ENCODE measurements at regions of chr1 and their contacts with region 1.

Region 1: GRCh38 chr1:198465201-198466144 is 75.0 kb downstream of the ATP6V1G3 start:
- DNase-seq: peak in 1 of 2 donors; percentile 5
- ATAC-seq: peak in 1 of 8 donors; percentile 46
- H3K4me3 ChIP-seq: no peak overlapping the region
- H3K27ac ChIP-seq: no peak overlapping the region
- H3K4me1 ChIP-seq: no peaks in the 10 kb centered on the region
- H3K27me3 ChIP-seq: peaks cover 0 to 5% (median 0%) of the 10 kb centered on the region in 7 donors
- CTCF ChIP-seq: peak; percentile 30 to 74 (median 69)

Region 2: GRCh38 chr1:197521118-197521739 is 944.2 kb before region 1 on chr1:
- intact Hi-C with region 1: loop called in 3 of 10 experiments (anchors 10 kb)
- DNase-seq: no peak
- ATAC-seq: no peak
- H3K4me3 ChIP-seq: no peak overlapping the region
- H3K27ac ChIP-seq: no peak overlapping the region
- H3K4me1 ChIP-seq: peaks cover 0 to 8% (median 0%) of the 10 kb centered on the region in 9 donors
- H3K27me3 ChIP-seq: no peaks in the 10 kb centered on the region
- CTCF ChIP-seq: peak in 8 of 9 donors; percentile 26 to 68 (median 57)

Region 3: GRCh38 chr1:197614916-197615692 is 850.4 kb before region 1 on chr1:
- intact Hi-C with region 1: loop called in 4 of 10 experiments (anchors 5 to 10 kb)
- DNase-seq: no peak
- ATAC-seq: peak in 6 of 8 donors; percentile 43 to 81 (median 55)
- H3K4me3 ChIP-seq: no peak overlapping the region
- H3K27ac ChIP-seq: no peak overlapping the region
- H3K4me1 ChIP-seq: peaks cover 0 to 23% (median 10%) of the 10 kb centered on the region in 9 donors
- H3K27me3 ChIP-seq: no peaks in the 10 kb centered on the region
- CTCF ChIP-seq: peak in 8 of 9 donors; percentile 19 to 72 (median 62)

Region 4: DNA sequence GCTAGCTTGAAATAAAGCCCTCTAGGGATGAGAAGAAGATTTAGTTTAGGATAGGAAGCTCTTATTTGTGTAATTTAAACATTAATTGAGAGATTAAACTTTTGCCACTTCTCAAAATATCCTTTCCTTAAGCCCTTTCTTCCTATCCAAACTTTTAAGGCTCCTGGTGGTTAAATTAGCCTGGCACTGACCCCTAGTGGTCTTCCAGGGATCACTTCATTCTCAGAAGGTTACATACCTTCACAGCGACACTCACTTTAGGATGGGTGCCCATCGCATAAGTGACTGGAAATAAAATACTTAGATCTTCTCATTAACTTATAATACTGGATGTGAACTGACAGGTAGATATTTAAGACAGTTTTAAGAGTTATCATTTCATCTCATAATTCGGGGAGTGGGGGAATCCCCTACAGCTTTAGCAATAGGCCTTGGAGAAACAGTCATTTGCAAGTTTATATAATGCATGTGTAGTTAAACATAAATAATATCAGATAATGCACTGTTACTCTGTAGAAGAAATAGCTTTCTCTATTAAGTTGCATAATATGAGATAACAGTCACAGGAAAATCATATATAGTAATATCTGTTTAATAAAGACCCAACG is 540.9 kb before region 1 on chr1:
- intact Hi-C with region 1: loop called in 1 of 10 experiments (anchors 10 kb)
- DNase-seq: peak in 1 of 2 donors; percentile 27
- ATAC-seq: peak in 3 of 8 donors; percentile 57 to 73 (median 67)
- H3K4me3 ChIP-seq: no peak overlapping the region
- H3K27ac ChIP-seq: no peak overlapping the region
- H3K4me1 ChIP-seq: peaks cover 0 to 19% (median 4%) of the 10 kb centered on the region in 9 donors
- H3K27me3 ChIP-seq: peaks cover 14 to 99% (median 85%) of the 10 kb centered on the region in 7 donors
- CTCF ChIP-seq: peak; percentile 35 to 82 (median 73)

Region 5: DNA sequence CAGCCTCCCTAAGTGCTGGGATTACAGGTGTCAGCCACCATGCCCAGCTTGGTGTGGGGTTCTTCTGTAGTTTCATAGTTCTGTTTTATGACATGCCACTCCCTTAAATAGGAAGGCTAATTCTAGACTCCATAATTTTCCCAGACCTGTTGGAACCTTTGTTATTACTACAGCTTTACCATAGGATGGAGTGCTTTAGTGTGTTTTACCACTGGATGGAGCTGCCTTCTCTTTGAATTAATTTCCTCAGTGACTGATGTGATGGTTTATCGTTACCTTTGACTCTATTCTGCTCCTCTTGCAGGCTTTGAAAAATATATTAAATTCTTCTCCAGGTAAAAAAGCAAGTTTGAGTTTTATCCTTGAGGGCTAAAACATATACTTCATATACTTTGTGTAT is 393.3 kb before region 1 on chr1:
- intact Hi-C with region 1: loop called in 1 of 10 experiments (anchors 5 kb)
- DNase-seq: no peak
- ATAC-seq: no peak
- H3K4me3 ChIP-seq: no peak overlapping the region
- H3K27ac ChIP-seq: no peak overlapping the region
- H3K4me1 ChIP-seq: no peaks in the 10 kb centered on the region
- H3K27me3 ChIP-seq: peaks cover 0 to 14% (median 7%) of the 10 kb centered on the region in 7 donors
- CTCF ChIP-seq: peak in 6 of 9 donors; percentile 9 to 45 (median 32)

Region 6: DNA sequence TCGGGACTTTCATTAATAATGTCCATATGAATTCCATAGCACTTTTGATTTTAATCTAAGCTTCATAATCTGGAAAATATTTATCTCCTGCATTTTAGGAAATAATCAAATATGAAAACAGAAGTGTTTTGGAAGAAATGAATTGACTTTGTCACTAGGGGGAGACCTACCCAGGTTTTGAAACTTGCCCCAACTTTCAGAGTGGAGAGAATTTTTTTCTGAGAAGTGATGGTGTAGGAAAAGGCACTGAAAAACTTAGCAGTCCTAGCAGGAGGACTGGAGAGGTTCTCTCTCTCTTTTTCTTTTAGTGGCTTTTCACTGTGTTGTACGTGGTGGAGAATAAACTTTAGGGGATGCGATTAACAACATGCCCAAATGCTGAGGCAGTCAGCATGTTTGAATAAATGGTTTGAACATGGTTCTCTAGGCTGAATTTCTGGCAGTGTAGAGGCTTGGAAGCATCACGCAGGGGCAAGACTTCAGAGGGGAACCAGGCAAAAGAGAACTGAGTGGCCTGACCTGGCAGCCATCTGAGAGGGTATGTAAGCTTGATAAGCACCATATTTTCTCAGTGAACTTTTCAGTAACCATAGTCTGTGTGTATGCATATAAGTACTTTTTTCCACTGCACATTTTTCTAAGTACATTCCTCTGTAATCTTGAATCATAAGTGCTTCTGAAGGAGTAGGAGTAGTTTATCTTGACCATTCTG is 377.0 kb before region 1 on chr1:
- intact Hi-C with region 1: loop called in 7 of 10 experiments (anchors 5 kb)
- DNase-seq: no peak
- ATAC-seq: peak in 1 of 8 donors; percentile 55
- H3K4me3 ChIP-seq: no peak overlapping the region
- H3K27ac ChIP-seq: no peak overlapping the region
- H3K4me1 ChIP-seq: peaks cover 0 to 11% (median 0%) of the 10 kb centered on the region in 9 donors
- H3K27me3 ChIP-seq: no peaks in the 10 kb centered on the region
- CTCF ChIP-seq: peak; percentile 13 to 76 (median 67)

Region 7: GRCh38 chr1:198201956-198202784 is 263.3 kb before region 1 on chr1:
- intact Hi-C with region 1: loop called in 1 of 10 experiments (anchors 10 kb)
- DNase-seq: no peak
- ATAC-seq: peak in 5 of 8 donors; percentile 26 to 70 (median 51)
- H3K4me3 ChIP-seq: no peak overlapping the region
- H3K27ac ChIP-seq: peak overlapping the region in 8 of 10 donors; percentile 22 to 48 (median 32)
- H3K4me1 ChIP-seq: peaks cover 0 to 95% (median 62%) of the 10 kb centered on the region in 9 donors
- H3K27me3 ChIP-seq: no peaks in the 10 kb centered on the region
- CTCF ChIP-seq: no peak

Region 8: DNA sequence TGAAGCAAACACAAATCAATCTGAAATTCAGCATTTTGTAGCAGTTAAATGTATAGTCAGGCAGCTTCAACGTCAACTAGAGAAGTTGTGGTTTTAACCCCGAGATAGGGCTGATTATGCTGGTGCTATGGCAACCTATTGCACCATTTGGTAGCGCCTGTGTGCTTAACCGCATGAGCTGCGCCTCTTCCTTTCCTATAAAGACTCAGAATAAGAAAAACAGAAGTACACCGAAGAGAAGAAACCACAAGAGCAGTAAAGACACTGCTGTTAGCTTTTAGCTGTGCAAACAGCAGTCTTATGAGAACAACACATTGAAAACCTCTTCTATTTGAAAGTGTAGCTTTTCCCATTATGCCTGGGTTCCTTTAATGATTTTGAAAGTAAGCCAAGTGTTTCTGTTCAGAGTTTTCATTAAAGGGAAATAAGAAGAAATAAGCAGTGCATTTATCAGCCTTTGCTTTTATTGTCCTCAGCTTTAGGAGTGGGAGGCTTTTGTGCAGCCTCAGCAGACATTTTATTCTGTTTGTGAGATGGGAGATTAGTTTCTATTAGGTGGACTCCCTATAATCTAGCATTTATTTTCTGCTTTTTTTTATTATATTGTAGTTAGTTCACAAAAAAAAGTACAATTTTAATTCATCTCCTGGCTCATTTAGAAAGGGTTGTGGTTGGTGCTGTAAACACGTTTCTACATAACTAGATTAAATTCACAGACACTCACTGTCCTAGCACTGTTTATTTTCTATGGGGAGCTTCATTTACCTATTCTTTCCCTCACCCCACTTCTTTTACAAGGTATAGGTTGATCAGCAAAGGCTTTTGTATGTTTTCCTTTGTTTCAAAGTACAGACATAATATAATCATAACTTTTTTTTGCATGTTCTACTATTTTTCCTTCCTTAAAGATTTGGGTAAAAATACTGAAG is 216.6 kb after region 1 on chr1:
- intact Hi-C with region 1: no loop called
- DNase-seq: peak in 1 of 2 donors; percentile 51
- ATAC-seq: peak in 7 of 8 donors; percentile 74 to 91 (median 83)
- H3K4me3 ChIP-seq: peak overlapping the region in 1 of 10 donors; percentile 20
- H3K27ac ChIP-seq: peak overlapping the region in 6 of 10 donors; percentile 4 to 91 (median 26)
- H3K4me1 ChIP-seq: peaks cover 0 to 92% (median 0%) of the 10 kb centered on the region in 9 donors
- H3K27me3 ChIP-seq: peaks cover 0 to 4% (median 0%) of the 10 kb centered on the region in 7 donors
- CTCF ChIP-seq: no peak